ENCODE measurements at regions of chr12 and their contacts with region 1.

Region 1: DNA sequence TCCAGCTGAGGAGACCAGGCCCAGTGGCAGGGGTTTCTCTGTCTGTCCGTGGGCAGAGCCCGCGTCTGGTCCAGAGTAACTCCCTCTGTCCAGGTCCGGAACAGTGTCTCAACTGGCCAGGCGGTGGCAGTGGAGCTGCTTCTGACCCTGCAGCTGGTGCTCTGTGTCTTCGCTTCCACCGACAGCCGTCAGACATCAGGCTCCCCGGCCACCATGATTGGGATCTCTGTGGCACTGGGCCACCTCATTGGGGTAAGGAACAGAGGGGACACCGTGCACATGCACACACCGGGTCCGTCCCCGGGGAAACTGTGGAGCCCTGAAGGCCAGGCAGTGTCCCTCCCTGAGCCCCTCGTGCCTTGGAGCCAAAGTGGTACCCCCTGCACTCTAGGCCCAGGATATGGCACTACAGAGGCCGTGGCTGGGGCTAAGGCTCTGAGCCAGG is 1.5 kb downstream of the AQP6 start:
- DNase-seq: peak; percentile 20 to 35
- ATAC-seq: peak; percentile 51 to 56
- H3K4me3 ChIP-seq: no peak overlapping the region
- H3K27ac ChIP-seq: no peak overlapping the region
- H3K4me1 ChIP-seq: no peaks in the 10 kb centered on the region
- H3K27me3 ChIP-seq: peaks cover 0 to 7% (median 0%) of the 10 kb centered on the region in 3 donors
- CTCF ChIP-seq: peak in 2 of 5 experiments; percentile 23 to 30
- POLR2A ChIP-seq: no peak

Region 2: GRCh38 chr12:49903695-49904423 is 70.4 kb before region 1 on chr12 and contains the start of gene FAIM2:
- in situ Hi-C with region 1: no loop called
- intact Hi-C with region 1: no loop called
- DNase-seq: peak in 1 of 2 donors; percentile 38
- ATAC-seq: peak; percentile 31 to 65
- H3K4me3 ChIP-seq: peak within 1 kb of the TSS; percentile 4 to 46 (median 34)
- H3K27ac ChIP-seq: no peak within 1 kb of the TSS
- H3K4me1 ChIP-seq: no peaks in the 10 kb centered on the region
- H3K27me3 ChIP-seq: peaks cover 18 to 21% (median 20%) of the 10 kb centered on the region in 3 donors
- CTCF ChIP-seq: no peak
- POLR2A ChIP-seq: no peak
- total RNA-seq, gene FAIM2: 0.13 to 1.1 TPM in 2 of 4 donors, not detected in the others

Region 3: GRCh38 chr12:50050410-50051098 is 76.3 kb after region 1 on chr12:
- in situ Hi-C with region 1: loop called in 3 of 4 experiments (anchors 5 kb)
- intact Hi-C with region 1: no loop called
- DNase-seq: peak; percentile 17 to 57
- ATAC-seq: peak; percentile 33 to 53
- H3K4me3 ChIP-seq: peak overlapping the region; percentile 25 to 34 (median 29)
- H3K27ac ChIP-seq: no peak overlapping the region
- H3K4me1 ChIP-seq: peaks cover 0 to under 1% of the 10 kb centered on the region in 2 donors
- H3K27me3 ChIP-seq: peaks cover 9 to 30% (median 12%) of the 10 kb centered on the region in 3 donors
- CTCF ChIP-seq: no peak
- POLR2A ChIP-seq: no peak

Region 4: GRCh38 chr12:50066433-50066832 is 92.2 kb after region 1 on chr12:
- in situ Hi-C with region 1: loop called in 1 of 4 experiments (anchors 5 kb)
- intact Hi-C with region 1: no loop called
- DNase-seq: no peak
- ATAC-seq: no peak
- H3K4me3 ChIP-seq: no peak overlapping the region
- H3K27ac ChIP-seq: no peak overlapping the region
- H3K4me1 ChIP-seq: no peaks in the 10 kb centered on the region
- H3K27me3 ChIP-seq: no peaks in the 10 kb centered on the region
- CTCF ChIP-seq: no peak
- POLR2A ChIP-seq: no peak

Region 5: DNA sequence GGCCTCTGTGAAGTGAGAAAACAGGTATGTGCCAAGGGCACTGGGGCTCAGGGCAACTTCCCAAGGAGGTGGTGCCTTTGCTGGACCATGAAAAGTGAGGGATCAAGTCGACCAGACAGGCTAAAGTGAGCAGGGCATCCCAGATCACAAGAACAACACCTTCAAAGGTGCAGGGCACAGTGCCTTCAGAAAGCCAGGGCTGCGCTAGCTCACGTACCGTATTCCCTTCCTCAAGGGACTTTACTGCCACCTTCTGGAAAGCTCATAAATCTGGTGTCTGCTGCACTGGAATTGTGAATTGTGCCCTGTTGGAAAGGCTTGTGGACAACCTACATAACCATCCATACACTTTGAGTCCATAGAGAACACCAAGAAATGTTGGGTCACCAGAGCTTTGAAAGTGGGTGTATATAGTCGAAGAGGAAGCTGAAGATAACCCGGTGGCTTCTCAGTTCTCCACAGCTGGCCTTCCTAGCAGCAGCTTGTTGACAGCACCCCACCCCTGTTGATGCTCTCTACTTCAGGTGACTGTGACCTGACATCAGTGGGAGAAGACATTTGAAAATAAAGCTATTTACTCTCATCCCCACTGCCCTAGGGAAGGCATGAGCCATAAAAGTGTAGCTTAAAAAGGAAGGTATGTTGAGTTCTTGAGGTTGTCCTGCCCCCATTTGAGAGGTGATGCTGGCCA is 1849.8 kb after region 1 on chr12:
- in situ Hi-C with region 1: no loop called
- intact Hi-C with region 1: no loop called
- DNase-seq: no peak
- ATAC-seq: no peak
- H3K4me3 ChIP-seq: no peak overlapping the region
- H3K27ac ChIP-seq: no peak overlapping the region
- H3K4me1 ChIP-seq: no peaks in the 10 kb centered on the region
- H3K27me3 ChIP-seq: peaks cover 0 to 10% (median 8%) of the 10 kb centered on the region in 3 donors
- CTCF ChIP-seq: peak in 1 of 5 experiments; percentile 29
- POLR2A ChIP-seq: no peak